Heart right ventricle (tissue), 16 donors: ENCODE measurements at regions of chr10 and their contacts with region 1.

Region 1: GRCh38 chr10:59906417-59907202 is at the start of gene CCDC6:
- DNase-seq: peak; percentile 91 to 92
- ATAC-seq: peak; percentile 94 to 98 (median 95)
- H3K4me3 ChIP-seq: peak within 1 kb of the TSS; percentile 82 to 98 (median 92)
- H3K27ac ChIP-seq: peak within 1 kb of the TSS; percentile 79 to 96 (median 90)
- H3K4me1 ChIP-seq: peaks cover 3 to 46% (median 36%) of the 10 kb centered on the region in 9 donors
- H3K27me3 ChIP-seq: no peaks in the 10 kb centered on the region
- CTCF ChIP-seq: peak; percentile 54 to 87 (median 80)
- total RNA-seq, gene CCDC6: 13.7 to 22.8 (median 17.4) TPM

Region 2: GRCh38 chr10:59830601-59831259 is 75.9 kb before region 1 on chr10:
- intact Hi-C with region 1: loop called in 3 of 10 experiments (anchors 5 to 10 kb)
- DNase-seq: peak in 1 of 2 donors; percentile 44
- ATAC-seq: peak in 7 of 8 donors; percentile 48 to 74 (median 68)
- H3K4me3 ChIP-seq: no peak overlapping the region
- H3K27ac ChIP-seq: no peak overlapping the region
- H3K4me1 ChIP-seq: peaks cover 0 to 50% (median 9%) of the 10 kb centered on the region in 9 donors
- H3K27me3 ChIP-seq: no peaks in the 10 kb centered on the region
- CTCF ChIP-seq: peak; percentile 53 to 85 (median 81)

Region 3: DNA sequence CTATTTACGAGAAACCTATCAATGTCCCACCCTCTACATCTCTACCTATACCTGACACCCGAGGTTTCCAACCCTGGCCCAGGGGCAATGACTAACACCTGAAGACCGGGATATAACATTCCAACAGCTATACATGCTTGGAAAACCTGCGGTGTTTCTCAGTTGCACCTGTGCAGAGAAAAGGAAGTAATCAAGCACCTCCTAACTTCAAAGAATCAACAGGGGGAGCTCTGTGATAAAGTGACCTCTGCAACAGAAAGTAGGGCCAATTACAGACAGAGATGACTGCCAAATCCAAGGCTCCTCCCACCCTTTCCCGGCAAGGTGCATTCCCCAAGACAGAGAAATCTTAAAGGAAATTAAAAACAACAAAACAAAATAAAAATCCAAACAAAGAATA is 41.5 kb before region 1 on chr10:
- intact Hi-C with region 1: loop called in 6 of 10 experiments (anchors 2 to 5 kb)
- DNase-seq: peak in 1 of 2 donors; percentile 40
- ATAC-seq: peak; percentile 67 to 88 (median 76)
- H3K4me3 ChIP-seq: no peak overlapping the region
- H3K27ac ChIP-seq: peak overlapping the region in 1 of 10 donors; percentile 25
- H3K4me1 ChIP-seq: peaks cover 0 to 45% (median 20%) of the 10 kb centered on the region in 9 donors
- H3K27me3 ChIP-seq: no peaks in the 10 kb centered on the region
- CTCF ChIP-seq: peak in 7 of 9 donors; percentile 38 to 68 (median 51)

Region 4: GRCh38 chr10:59872892-59873463 is 33.6 kb before region 1 on chr10:
- intact Hi-C with region 1: loop called in 5 of 10 experiments (anchors 5 kb)
- DNase-seq: peak in 1 of 2 donors; percentile 41
- ATAC-seq: peak in 7 of 8 donors; percentile 50 to 83 (median 77)
- H3K4me3 ChIP-seq: peak overlapping the region in 5 of 10 donors; percentile 1 to 25 (median 8)
- H3K27ac ChIP-seq: peak overlapping the region in 2 of 10 donors; percentile 22 to 46
- H3K4me1 ChIP-seq: peaks cover 0 to 46% (median 30%) of the 10 kb centered on the region in 9 donors
- H3K27me3 ChIP-seq: no peaks in the 10 kb centered on the region
- CTCF ChIP-seq: no peak

Region 5: GRCh38 chr10:59945664-59946390 is 39.2 kb after region 1 on chr10:
- intact Hi-C with region 1: no loop called
- DNase-seq: no peak
- ATAC-seq: no peak
- H3K4me3 ChIP-seq: no peak overlapping the region
- H3K27ac ChIP-seq: no peak overlapping the region
- H3K4me1 ChIP-seq: no peaks in the 10 kb centered on the region
- H3K27me3 ChIP-seq: no peaks in the 10 kb centered on the region
- CTCF ChIP-seq: no peak